ENCODE measurements at regions of chr9 and their contacts with region 1.

Region 1: DNA sequence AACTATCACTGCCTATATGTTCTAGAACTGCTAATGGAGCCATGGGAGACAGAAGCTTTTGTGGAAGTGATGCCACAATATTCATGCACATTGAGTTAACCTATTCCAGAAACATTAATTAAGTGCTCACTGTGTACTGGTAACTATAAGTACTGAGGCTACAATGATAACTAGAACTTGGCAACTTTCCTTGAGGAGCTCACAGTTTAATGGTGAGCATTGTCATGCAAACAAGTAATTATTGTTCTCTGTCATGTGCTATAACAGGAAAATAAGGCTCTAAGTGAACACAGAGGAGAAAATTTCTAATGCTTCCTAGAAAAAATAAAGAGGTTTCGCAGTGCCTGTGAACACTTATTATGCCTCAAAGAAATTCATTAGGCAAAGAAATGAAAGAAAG is 142.2 kb downstream of the BAAT start:
- DNase-seq: peak in 3 of 42 donors; percentile 32 to 55 (median 33)

Region 2: DNA sequence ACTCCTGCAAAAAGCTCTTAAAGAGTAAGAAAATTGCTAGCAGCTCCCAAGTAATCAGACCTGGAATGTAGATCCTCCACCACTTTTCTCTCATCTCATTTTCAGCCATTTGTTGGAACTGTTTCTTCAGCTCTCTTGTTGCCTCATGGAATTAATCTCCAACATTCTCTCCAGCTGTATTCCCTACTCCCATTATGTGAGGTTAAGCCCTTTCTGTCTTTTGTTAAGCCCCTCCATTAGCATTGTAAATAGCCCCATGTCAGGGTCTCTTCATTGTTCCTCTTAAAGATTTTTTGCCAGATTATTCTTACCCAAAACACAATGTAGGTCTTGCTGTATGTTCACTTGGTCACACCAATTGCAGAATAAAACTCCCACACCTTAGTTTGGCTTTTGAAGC is 94.3 kb before region 1 on chr9:
- intact Hi-C with region 1: no loop called
- DNase-seq: no peak

Region 3: GRCh38 chr9:101354143-101354764 is 111.6 kb after region 1 on chr9:
- intact Hi-C with region 1: no loop called
- DNase-seq: no peak

Region 4: DNA sequence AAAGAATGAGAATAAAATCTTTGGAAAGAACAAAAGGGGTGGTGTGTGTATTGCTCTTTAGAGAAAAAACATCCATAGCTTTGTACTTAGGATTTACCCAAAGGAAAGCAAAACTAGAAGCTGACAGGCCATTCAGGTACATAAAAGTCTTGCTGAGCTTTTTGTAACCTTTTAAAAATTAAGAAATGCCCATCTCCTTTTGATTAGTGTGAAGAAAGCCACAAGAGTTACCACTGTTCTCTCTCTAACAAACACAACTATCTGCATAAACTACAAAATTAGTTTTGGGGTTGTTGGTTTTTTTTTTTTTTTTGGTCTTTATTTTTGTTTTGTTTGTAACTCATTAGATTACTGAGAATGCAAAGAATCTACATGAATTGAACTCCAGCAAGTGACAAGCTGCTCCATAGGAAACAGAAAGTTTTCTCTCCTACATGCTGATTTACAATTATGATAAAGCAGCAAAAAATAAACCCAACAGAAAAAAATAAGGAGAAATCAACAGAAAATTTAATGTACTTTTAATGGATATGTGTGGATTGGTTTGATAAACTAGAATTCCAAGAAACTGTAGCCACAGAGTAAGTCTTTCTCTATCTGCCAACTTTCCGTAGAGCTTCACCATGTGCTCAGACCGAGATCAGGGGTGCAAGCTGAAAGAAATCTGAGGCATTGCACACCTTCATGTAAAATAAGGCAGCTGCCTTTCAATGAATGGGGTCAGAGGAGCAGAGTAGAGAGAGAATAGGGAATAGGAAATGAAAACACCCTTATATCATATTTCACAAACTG is 129.9 kb after region 1 on chr9:
- intact Hi-C with region 1: no loop called
- DNase-seq: no peak

Region 5: DNA sequence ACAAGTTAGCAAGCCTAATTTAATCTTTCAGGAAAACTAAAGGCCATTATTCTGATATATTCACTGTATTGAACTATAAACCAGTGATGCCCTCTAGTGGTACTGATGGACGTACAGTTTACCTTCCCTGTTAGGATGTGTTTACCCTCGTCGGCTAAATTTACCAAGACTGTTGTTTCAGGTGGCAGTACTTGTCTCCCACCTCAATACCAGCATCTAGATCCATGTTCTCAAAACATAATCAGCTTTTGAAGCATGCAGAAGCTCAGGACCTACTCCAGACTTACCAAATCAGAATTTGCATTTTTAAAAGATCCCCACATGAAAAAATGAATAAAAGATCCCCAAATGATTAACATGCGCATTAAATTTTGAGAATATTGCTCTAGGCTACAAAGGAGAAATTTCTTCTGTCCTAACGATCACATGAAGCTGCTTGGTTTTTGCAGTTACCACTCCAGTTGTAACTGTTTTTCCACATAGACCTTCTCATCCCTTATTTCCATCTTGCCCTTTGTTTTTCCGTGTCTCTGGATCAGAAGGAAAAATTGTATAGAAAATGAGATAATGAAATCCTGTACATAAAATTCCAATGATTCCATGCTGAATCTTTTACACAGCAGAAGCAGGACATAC is 145.3 kb after region 1 on chr9:
- intact Hi-C with region 1: loop called (anchors 10 kb)
- DNase-seq: peak in 10 of 42 donors; percentile 13 to 64 (median 36)

Measured in head of caudate nucleus (tissue), 42 donors.